ENCODE measurements at regions of chr10 and their contacts with region 1.

Region 1: GRCh38 chr10:64112701-64113355 is 591.6 kb downstream of the REEP3 start:
- DNase-seq: no peak
- ATAC-seq: no peak
- H3K4me3 ChIP-seq: no peak overlapping the region
- H3K4me3 Mint-ChIP-seq: no peak overlapping the region
- H3K27ac ChIP-seq: no peak overlapping the region
- H3K27ac Mint-ChIP-seq: no peak overlapping the region
- H3K4me1 ChIP-seq: peaks cover 3% of the 10 kb centered on the region
- H3K4me1 Mint-ChIP-seq: peaks cover 2% of the 10 kb centered on the region
- H3K27me3 ChIP-seq: no peaks in the 10 kb centered on the region
- H3K27me3 Mint-ChIP-seq: no peaks in the 10 kb centered on the region
- CTCF ChIP-seq: no peak

Region 2: GRCh38 chr10:64142395-64142794 is 29.6 kb after region 1 on chr10:
- CTCF ChIA-PET with region 1: no interaction called
- POLR2A ChIA-PET with region 1: no interaction called
- intact Hi-C with region 1: loop called in 1 of 2 experiments (anchors 2 kb)
- DNase-seq: no peak
- ATAC-seq: no peak
- H3K4me3 ChIP-seq: no peak overlapping the region
- H3K4me3 Mint-ChIP-seq: no peak overlapping the region
- H3K27ac ChIP-seq: no peak overlapping the region
- H3K27ac Mint-ChIP-seq: no peak overlapping the region
- H3K4me1 ChIP-seq: no peaks in the 10 kb centered on the region
- H3K4me1 Mint-ChIP-seq: no peaks in the 10 kb centered on the region
- H3K27me3 ChIP-seq: no peaks in the 10 kb centered on the region
- H3K27me3 Mint-ChIP-seq: no peaks in the 10 kb centered on the region
- CTCF ChIP-seq: no peak

Region 3: GRCh38 chr10:64798297-64798696 is 685.5 kb after region 1 on chr10:
- CTCF ChIA-PET with region 1: no interaction called
- POLR2A ChIA-PET with region 1: no interaction called
- intact Hi-C with region 1: no loop called
- DNase-seq: no peak
- ATAC-seq: no peak
- H3K4me3 ChIP-seq: no peak overlapping the region
- H3K4me3 Mint-ChIP-seq: no peak overlapping the region
- H3K27ac ChIP-seq: no peak overlapping the region
- H3K27ac Mint-ChIP-seq: no peak overlapping the region
- H3K4me1 ChIP-seq: no peaks in the 10 kb centered on the region
- H3K4me1 Mint-ChIP-seq: no peaks in the 10 kb centered on the region
- H3K27me3 ChIP-seq: no peaks in the 10 kb centered on the region
- H3K27me3 Mint-ChIP-seq: no peaks in the 10 kb centered on the region
- CTCF ChIP-seq: no peak